ENCODE measurements at regions of chr4 and their contacts with region 1.

Region 1: DNA sequence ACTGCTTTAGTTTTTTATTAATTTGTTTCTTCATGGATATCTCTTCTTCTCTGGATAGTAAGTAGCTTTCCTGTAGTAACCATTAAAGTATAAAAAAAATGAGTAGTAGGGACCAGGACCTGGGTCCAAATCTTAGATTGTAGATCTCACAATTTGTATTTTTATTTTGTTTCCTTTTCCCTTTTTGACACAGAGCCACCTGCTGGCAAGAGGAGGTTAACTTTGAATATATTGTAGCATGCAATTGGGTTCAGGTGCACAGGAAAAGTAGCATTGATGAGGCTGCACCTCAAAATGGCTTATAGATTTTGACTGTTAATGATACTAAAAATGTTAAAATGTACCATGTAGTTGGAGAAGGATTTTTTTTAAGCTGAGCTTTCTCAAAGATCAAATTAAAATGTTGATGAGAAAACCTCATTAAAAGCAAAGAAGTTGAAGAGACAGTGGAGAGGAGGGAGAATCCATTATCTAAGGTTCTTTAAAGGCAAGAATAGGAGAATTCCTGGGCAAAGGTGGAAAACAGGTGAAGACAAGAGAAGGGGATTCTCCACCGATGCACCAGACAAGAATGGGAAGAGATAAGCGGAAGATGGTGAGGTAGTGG is 48.3 kb upstream of the HPGDS start:
- DNase-seq: peak; percentile 27
- H3K4me3 ChIP-seq: no peak overlapping the region
- H3K27ac ChIP-seq: no peak overlapping the region
- H3K4me1 ChIP-seq: no peaks in the 10 kb centered on the region
- H3K27me3 ChIP-seq: no peaks in the 10 kb centered on the region
- CTCF ChIP-seq: peak; percentile 33

Region 2: GRCh38 chr4:94207469-94208224 is 183.3 kb before region 1 on chr4 and contains the start of gene SMARCAD1:
- intact Hi-C with region 1: no loop called
- DNase-seq: peak; percentile 93
- H3K4me3 ChIP-seq: peak within 1 kb of the TSS; percentile 82
- H3K27ac ChIP-seq: peak within 1 kb of the TSS; percentile 85
- H3K4me1 ChIP-seq: peaks cover 10% of the 10 kb centered on the region
- H3K27me3 ChIP-seq: no peaks in the 10 kb centered on the region
- CTCF ChIP-seq: no peak
- total RNA-seq, gene SMARCAD1: 15.3 to 18.2 TPM

Region 3: DNA sequence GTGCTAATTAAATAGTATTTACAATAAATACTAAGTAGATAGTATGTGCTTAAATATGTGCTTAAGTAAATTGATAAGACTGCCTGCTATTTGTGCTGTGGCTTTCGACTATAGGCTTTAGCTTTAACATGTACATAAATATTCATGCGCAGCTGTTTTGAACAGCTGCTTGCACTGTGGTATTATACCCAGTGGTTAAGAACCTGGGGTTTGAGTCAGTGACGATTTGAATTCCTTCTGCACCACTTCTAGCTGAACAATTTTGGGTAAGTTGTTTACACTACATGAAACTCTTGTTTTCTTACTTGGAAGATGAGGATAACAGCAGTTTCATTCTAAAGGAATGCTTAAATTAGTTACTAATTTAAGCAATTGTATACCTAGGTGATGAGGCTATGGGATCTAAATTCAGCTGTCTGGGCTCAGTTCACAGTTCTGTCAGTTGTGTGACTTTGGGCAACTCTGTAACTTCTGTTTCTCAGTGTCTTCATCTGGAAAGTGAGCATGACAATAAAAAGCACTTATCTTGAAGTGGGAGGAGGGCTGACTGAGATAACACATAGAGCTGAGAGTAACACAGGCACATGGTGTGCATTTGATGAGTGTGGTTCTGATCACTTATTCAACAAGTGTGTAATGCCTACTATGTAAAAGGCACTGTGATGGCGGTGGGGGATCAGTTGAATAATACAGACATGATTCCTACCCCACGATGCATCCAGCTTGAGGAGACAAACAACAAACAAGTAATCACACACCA is 85.3 kb before region 1 on chr4:
- intact Hi-C with region 1: loop called (anchors 5 kb)
- DNase-seq: no peak
- H3K4me3 ChIP-seq: no peak overlapping the region
- H3K27ac ChIP-seq: no peak overlapping the region
- H3K4me1 ChIP-seq: no peaks in the 10 kb centered on the region
- H3K27me3 ChIP-seq: no peaks in the 10 kb centered on the region
- CTCF ChIP-seq: no peak